CD14-positive monocyte (primary cell): ENCODE measurements at regions of chr1 and their contacts with region 1.

Region 1: DNA sequence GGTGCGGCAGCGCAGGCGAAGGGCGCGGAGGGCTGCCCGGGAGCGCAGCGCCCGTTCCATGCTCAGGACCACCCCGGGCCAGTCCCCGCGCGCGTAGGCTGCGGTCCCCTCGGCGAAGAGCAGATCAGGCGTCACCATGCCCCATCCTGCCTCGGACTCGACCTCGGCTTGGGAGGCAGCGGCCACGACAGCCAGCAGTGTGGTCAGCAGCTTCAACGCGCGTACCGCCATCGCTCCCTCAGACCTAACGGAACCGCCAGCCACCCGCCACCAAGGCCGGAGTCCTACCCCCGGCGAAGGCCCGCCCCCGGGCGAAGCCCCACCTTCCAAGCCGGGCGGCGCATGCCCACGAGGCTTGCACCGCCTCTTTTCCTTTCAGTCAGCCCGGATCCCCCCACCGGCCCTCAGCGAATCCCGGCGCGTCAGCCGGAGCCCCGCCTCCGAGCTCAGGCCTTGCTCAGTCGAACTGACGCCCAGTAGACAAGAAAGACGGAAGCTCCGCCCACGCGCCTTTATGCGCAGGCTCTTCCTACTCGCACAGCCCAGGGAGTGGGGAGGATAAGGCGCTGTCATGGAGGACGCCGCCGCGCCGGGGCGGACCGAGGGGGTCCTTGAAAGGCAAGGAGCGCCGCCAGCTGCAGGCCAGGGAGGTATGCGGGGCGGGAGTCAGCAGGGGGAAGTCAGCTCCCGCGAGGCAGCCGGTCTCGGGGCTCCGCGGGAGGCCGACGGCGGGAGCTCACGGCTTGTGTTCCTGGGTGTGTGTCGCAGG is at the starts of genes C1orf50 and P3H1:
- DNase-seq: peak; percentile 98 to 100 (median 99)
- H3K4me3 ChIP-seq: peak within 1 kb of the TSS; percentile 87 to 94 (median 88)
- H3K4me3 Mint-ChIP-seq: peak within 1 kb of the TSS in 1 of 2 donors; percentile 95
- H3K27ac ChIP-seq: peak within 1 kb of the TSS; percentile 41 to 90
- H3K27ac Mint-ChIP-seq: peak within 1 kb of the TSS in 6 of 7 donors; percentile 86 to 96 (median 93)
- H3K4me1 ChIP-seq: peaks cover 24 to 33% of the 10 kb centered on the region in 2 donors
- H3K4me1 Mint-ChIP-seq: peaks cover 24% of the 10 kb centered on the region
- H3K27me3 ChIP-seq: no peaks in the 10 kb centered on the region
- H3K27me3 Mint-ChIP-seq: no peaks in the 10 kb centered on the region
- CTCF ChIP-seq: no peak
- polyA plus RNA-seq, gene C1orf50: 3.7 to 9.2 (median 4.3) TPM
- polyA plus RNA-seq, gene P3H1: 16.8 to 56.9 (median 16.9) TPM

Region 2: DNA sequence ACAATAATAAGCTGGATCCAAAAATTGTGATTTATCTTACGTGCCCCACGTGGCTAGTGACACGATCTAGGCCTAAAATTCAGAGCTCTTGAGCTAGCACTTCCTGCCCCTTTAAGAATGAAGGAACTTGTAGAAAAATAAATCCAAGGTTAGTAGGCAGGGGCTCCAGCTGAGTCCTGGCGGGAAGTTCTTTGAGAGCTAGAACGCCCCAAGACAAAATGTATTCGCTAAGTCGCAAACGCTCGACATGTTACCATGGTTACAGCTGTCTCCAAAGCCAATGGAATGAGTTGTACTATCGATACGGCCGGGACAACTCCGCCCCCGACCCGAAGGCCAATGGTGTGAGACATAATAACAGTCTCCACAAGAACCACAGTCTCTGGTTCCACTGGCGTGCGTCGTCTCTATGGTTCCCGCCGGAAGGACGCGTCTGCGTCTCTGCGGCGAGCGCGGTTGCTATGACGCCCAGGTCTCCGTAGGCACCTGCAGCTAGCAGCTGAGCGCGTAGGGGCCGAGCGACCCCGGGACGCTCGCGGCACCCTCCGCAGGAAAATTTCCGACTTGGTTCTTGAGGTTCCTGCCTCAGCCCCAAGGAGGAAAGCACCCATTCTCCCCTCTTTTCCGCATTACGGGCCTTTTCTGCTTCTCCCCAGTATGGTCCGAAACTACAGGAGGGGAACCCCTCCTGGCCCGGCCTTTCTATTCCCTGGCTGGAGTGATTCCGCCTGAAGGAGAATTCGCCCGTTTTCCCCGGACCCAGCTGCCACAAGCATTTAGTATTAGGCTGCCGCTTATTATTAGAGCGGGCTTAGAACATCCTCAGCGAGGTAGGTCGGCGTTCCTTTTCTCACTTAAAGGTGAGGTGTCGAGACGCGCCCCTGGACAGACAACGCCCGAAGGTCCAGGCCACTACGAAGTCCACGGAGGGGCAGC is 303.8 kb before region 1 on chr1 and contains the start of gene CCDC30:
- intact Hi-C with region 1: loop called in 1 of 2 experiments (anchors 10 kb)
- DNase-seq: peak; percentile 89 to 95 (median 94)
- H3K4me3 ChIP-seq: peak within 1 kb of the TSS; percentile 37 to 73 (median 68)
- H3K4me3 Mint-ChIP-seq: peak within 1 kb of the TSS; percentile 83 to 91
- H3K27ac ChIP-seq: peak within 1 kb of the TSS; percentile 20 to 34
- H3K27ac Mint-ChIP-seq: peak within 1 kb of the TSS in 6 of 7 donors; percentile 68 to 85 (median 82)
- H3K4me1 ChIP-seq: peaks cover 16 to 18% of the 10 kb centered on the region in 2 donors
- H3K4me1 Mint-ChIP-seq: peaks cover 28% of the 10 kb centered on the region
- H3K27me3 ChIP-seq: no peaks in the 10 kb centered on the region
- H3K27me3 Mint-ChIP-seq: peaks cover 0 to 2% (median 1%) of the 10 kb centered on the region in 3 donors
- CTCF ChIP-seq: no peak
- polyA plus RNA-seq, gene CCDC30: 0.95 to 1.5 (median 1.2) TPM

Region 3: DNA sequence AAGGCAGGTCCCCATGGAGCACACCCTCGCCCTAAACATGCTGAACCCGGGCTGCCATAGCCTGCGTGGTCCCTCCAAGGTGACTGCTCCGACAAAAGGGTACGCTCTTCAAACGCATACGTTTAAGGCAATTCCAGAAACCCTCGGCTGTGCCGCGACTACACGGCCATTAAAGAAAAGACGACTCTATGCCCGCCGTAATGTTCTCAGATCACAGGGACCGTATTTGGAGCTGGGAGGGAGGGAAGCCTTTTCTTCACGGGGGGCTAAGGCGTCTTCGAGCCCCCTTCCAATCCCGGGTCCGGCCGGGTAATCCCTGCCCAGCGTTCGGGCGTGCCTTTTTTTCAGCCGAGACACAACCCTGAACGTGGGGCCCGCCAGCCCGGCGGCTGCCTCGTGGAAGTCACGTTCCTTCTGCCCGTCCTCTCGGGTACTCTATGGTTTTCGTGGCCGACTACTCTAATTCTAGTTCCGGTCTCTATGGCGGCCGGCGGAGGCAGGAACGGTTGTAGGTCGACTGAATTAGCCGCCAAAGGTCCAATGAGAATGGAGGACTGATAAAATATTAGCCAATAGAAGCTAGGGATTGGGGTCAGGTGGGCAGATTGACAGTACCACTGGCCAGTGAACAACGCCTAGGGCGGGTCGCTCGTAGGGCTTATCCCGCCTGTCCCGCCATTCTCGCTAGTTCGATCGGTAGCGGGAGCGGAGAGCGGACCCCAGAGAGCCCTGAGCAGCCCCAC is 85.0 kb before region 1 on chr1 and contains the start of gene YBX1:
- intact Hi-C with region 1: loop called (anchors 2 to 5 kb)
- DNase-seq: peak; percentile 97 to 99 (median 97)
- H3K4me3 ChIP-seq: peak within 1 kb of the TSS; percentile 58 to 95 (median 85)
- H3K4me3 Mint-ChIP-seq: peak within 1 kb of the TSS; percentile 91 to 94
- H3K27ac ChIP-seq: peak within 1 kb of the TSS; percentile 78 to 92
- H3K27ac Mint-ChIP-seq: peak within 1 kb of the TSS; percentile 91 to 98 (median 96)
- H3K4me1 ChIP-seq: peaks cover 36 to 50% of the 10 kb centered on the region in 2 donors
- H3K4me1 Mint-ChIP-seq: peaks cover 49% of the 10 kb centered on the region
- H3K27me3 ChIP-seq: no peaks in the 10 kb centered on the region
- H3K27me3 Mint-ChIP-seq: no peaks in the 10 kb centered on the region
- CTCF ChIP-seq: no peak
- polyA plus RNA-seq, gene YBX1: 65.7 to 301 (median 70.2) TPM

Region 4: DNA sequence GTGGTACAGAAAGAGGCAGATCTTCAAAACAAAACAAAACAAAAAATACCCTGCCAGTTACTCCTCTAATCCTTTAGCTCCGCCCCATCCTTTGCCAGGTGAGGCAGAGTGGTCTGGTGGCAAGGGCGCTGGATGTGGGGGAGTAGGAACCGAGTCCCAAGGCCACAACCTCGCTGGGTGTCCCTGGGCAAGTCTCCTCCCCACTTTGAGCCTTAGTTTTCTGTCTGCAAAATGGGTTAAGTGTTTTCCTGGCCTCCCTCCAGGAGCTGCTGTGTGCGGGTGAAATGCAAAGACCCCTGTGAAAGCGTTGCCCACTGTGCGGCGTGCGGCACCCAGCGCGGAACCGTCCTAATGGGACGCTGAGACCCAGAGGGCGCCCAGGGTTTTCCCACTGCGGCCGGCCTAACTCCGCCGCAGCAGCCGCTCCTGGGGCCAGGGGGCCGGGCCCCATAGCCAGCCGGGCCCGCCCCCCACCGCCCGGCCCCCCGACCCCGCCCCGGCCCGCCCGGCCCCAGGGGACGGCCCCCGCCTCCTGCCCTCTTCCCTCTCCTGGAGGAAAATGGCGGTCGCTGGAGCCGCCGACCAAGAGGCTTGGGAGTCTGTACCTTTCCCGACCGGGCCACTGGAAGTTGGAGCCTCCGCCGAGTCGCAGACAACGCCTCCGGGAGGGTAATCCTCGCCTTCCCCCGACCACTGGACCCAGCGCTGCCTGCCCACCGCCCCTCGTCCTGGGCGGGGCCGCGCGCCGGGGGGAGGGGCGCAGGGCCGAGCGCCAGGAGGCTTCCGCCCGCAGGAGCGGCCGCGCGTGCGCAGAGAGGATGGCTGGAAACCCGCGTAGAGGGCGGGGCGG is 49.9 kb after region 1 on chr1 and contains the starts of genes ERMAP and SVBP:
- intact Hi-C with region 1: loop called (anchors 2 to 5 kb)
- DNase-seq: peak; percentile 84 to 87 (median 85)
- H3K4me3 ChIP-seq: peak within 1 kb of the TSS; percentile 72 to 94 (median 86)
- H3K4me3 Mint-ChIP-seq: peak within 1 kb of the TSS; percentile 85 to 92
- H3K27ac ChIP-seq: peak within 1 kb of the TSS; percentile 81 to 88
- H3K27ac Mint-ChIP-seq: peak within 1 kb of the TSS; percentile 87 to 98 (median 92)
- H3K4me1 ChIP-seq: peaks cover 18 to 20% of the 10 kb centered on the region in 2 donors
- H3K4me1 Mint-ChIP-seq: peaks cover 38% of the 10 kb centered on the region
- H3K27me3 ChIP-seq: no peaks in the 10 kb centered on the region
- H3K27me3 Mint-ChIP-seq: peaks cover 0 to 2% (median 0%) of the 10 kb centered on the region in 3 donors
- CTCF ChIP-seq: no peak
- polyA plus RNA-seq, gene ERMAP: 6.0 to 22.7 (median 8.4) TPM
- polyA plus RNA-seq, gene SVBP: 19.5 to 56.1 (median 54.3) TPM

Region 5: GRCh38 chr1:43171876-43172526 is 405.1 kb after region 1 on chr1 and contains the starts of genes CFAP57 and EBNA1BP2:
- intact Hi-C with region 1: loop called in 1 of 2 experiments (anchors 5 kb)
- DNase-seq: peak; percentile 95
- H3K4me3 ChIP-seq: peak within 1 kb of the TSS; percentile 62 to 98 (median 80)
- H3K4me3 Mint-ChIP-seq: peak within 1 kb of the TSS; percentile 94 to 96
- H3K27ac ChIP-seq: peak within 1 kb of the TSS in 1 of 2 donors; percentile 71
- H3K27ac Mint-ChIP-seq: peak within 1 kb of the TSS; percentile 71 to 97 (median 95)
- H3K4me1 ChIP-seq: peaks cover 9 to 16% of the 10 kb centered on the region in 2 donors
- H3K4me1 Mint-ChIP-seq: peaks cover 17% of the 10 kb centered on the region
- H3K27me3 ChIP-seq: peaks cover 0 to 23% of the 10 kb centered on the region in 2 donors
- H3K27me3 Mint-ChIP-seq: peaks cover 5 to 17% (median 13%) of the 10 kb centered on the region in 3 donors
- CTCF ChIP-seq: no peak
- polyA plus RNA-seq, gene CFAP57: 0.01 to 0.05 TPM in 2 of 3 donors, not detected in the other
- polyA plus RNA-seq, gene EBNA1BP2: 10.2 to 37.2 (median 30.9) TPM